MCF 10A (cell line): ENCODE measurements at regions of chr1 and their contacts with region 1.

Region 1: GRCh38 chr1:39204441-39205081 is at the start of gene MACF1:
- DNase-seq: peak; percentile 76
- H3K4me3 Mint-ChIP-seq: peak within 1 kb of the TSS; percentile 49
- H3K27ac Mint-ChIP-seq: peak within 1 kb of the TSS; percentile 93
- H3K4me1 Mint-ChIP-seq: peaks cover 34% of the 10 kb centered on the region
- H3K27me3 Mint-ChIP-seq: no peaks in the 10 kb centered on the region
- CTCF ChIP-seq: peak; percentile 13
- total RNA-seq, gene MACF1: 188 and 197 TPM in 2 replicates

Region 2: DNA sequence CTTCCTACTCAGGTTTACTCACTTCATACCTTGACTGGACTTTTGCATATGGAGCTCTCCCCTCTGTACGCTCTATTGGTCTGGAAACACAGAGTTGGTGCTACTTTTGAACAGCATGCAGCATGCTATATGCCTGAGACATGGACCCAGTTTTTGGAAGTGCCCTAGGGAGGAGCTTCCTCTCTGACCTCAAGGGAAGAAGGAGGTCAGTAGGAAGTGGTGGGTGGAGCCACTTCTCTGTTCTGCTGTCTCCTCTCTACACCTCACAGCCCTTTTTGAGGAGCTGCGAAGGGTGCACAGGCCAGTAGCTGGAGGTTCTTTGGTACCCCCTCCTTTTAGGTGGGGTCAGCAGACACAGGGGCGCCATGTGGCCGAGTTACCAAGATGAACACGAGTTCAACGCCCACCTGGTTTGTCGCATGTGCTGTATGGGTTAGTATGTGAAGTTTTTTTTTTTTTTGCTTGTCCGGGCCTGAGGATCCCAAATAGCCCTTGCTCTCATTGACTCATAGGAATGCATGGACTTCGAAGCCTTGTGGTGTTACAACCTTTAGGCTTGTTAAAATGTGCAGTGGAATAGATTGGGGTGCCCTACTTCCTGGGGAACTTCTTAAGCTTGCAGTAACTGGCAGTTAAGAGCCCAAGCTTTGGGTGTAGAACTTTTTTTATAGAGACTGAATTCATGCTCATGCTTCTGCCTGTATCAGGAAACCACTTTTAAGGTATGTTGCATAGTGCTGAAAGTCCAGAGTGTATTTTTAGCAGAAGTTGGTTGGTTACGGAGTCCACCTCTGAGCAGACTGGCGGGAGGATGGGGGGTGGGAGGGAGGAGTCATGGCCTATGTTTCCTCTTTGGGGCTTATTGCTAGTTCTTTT is 10.7 kb after region 1 on chr1:
- CTCF ChIA-PET with region 1: interaction called, 12 read pairs
- POLR2A ChIA-PET with region 1: interaction called, 39 read pairs
- intact Hi-C with region 1: no loop called
- DNase-seq: no peak
- H3K4me3 Mint-ChIP-seq: no peak overlapping the region
- H3K27ac Mint-ChIP-seq: peak overlapping the region; percentile 60
- H3K4me1 Mint-ChIP-seq: peaks cover 33% of the 10 kb centered on the region
- H3K27me3 Mint-ChIP-seq: no peaks in the 10 kb centered on the region
- CTCF ChIP-seq: no peak